Right ventricle myocardium inferior (tissue), 1 donor: ENCODE measurements at regions of chr3 and their contacts with region 1.

Region 1: DNA sequence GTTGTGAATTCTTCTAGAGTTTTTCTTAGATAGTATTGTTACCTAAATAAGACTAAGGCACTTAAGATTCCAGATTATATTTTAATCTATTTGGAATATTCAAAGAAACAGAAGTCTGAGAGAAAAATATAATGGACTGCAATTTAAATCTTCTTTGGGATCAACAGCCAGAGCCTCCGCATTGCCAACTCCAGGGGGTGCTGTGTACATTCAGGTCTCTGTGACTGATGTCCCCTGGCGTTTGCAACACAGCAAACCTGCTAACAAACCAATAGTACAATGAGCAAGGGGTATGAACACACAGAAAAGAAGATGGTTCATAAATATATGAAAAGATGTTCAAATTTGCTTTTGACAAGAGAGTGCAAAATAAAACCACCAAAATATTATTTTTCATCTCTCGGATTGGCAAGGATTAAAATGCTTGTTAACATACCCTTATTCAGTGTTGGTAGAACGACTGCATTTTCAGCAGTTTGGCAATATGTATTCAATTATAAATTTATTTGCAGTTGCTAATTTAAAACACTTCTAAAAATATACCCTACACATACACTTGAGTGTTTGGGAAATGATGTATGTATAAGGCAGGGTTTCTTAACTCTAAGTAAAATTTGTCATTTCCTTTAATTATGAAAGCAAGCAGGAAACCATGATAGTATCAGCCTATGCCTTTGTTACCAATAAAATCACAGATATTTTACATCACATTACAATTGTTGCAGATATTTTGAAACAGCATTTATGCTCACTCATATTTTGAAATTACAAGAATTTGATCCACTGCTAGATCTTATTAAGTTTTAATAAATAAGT is 16.1 kb upstream of the TM4SF1 start:
- DNase-seq: peak; percentile 68
- ATAC-seq: peak; percentile 79

Region 2: GRCh38 chr3:149352556-149352955 is 41.0 kb before region 1 on chr3:
- intact Hi-C with region 1: loop called (anchors 5 kb)
- DNase-seq: peak; percentile 74
- ATAC-seq: peak; percentile 67